ENCODE measurements at regions of chr7 and their contacts with region 1.

Region 1: DNA sequence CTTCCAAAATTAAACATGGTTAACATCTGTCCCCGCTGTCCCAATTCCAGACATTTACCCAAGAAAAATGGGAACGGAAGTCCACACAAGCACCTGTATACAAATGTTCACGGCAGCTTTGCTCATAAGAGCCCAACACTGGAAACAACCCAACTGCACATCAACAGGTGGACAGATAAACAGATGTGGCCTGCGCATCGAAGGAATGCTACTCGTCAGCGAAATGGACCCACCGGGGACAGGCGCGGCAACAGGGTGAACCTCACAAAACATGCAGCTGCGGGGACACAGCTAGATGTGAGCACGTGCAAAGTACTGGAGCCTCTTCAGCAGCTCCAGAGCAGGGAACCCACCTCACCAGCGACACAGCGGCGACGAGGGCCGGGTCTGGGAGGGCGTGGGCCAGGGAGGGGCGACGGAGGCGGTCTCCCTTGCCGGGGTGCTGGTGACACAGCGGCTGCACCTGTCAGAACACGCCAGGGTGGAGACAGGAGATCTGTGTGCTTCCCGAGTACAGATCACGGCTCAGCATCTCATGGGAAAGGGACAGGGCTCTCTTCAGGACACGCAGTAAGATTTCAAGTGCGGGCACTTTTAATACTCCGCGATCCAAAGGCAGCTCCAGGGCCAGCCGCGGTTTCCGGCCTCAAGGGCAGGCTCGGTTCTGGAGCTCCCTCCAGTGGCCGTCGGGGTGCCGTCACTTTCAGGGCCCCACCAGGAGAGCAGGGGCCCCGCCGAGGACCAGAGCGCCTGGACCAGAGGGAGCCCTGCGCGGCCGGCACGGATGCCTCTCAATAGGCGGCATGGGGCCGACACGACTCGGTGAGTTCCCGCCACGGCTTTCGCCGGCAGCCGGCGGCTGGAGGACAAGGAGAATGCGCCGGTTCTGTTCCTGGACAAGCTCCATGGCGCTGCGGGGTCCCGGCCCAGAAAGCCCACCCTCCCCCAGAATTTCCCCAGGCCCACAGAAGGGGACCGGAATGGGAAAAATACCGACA is 21.2 kb downstream of the GPR146 start:
- DNase-seq: peak; percentile 83
- ATAC-seq: peak; percentile 73
- H3K4me3 Mint-ChIP-seq: peak overlapping the region; percentile 73
- H3K27ac Mint-ChIP-seq: no peak overlapping the region
- H3K4me1 Mint-ChIP-seq: peaks cover 43% of the 10 kb centered on the region
- H3K27me3 Mint-ChIP-seq: peaks cover 5% of the 10 kb centered on the region
- CTCF ChIP-seq: peak; percentile 67

Region 2: GRCh38 chr7:691368-692040 is 374.1 kb before region 1 on chr7:
- CTCF ChIA-PET with region 1: no interaction called
- POLR2A ChIA-PET with region 1: no interaction called
- intact Hi-C with region 1: no loop called
- DNase-seq: no peak
- ATAC-seq: no peak
- H3K4me3 Mint-ChIP-seq: no peak overlapping the region
- H3K27ac Mint-ChIP-seq: no peak overlapping the region
- H3K4me1 Mint-ChIP-seq: no peaks in the 10 kb centered on the region
- H3K27me3 Mint-ChIP-seq: no peaks in the 10 kb centered on the region
- CTCF ChIP-seq: no peak

Region 3: DNA sequence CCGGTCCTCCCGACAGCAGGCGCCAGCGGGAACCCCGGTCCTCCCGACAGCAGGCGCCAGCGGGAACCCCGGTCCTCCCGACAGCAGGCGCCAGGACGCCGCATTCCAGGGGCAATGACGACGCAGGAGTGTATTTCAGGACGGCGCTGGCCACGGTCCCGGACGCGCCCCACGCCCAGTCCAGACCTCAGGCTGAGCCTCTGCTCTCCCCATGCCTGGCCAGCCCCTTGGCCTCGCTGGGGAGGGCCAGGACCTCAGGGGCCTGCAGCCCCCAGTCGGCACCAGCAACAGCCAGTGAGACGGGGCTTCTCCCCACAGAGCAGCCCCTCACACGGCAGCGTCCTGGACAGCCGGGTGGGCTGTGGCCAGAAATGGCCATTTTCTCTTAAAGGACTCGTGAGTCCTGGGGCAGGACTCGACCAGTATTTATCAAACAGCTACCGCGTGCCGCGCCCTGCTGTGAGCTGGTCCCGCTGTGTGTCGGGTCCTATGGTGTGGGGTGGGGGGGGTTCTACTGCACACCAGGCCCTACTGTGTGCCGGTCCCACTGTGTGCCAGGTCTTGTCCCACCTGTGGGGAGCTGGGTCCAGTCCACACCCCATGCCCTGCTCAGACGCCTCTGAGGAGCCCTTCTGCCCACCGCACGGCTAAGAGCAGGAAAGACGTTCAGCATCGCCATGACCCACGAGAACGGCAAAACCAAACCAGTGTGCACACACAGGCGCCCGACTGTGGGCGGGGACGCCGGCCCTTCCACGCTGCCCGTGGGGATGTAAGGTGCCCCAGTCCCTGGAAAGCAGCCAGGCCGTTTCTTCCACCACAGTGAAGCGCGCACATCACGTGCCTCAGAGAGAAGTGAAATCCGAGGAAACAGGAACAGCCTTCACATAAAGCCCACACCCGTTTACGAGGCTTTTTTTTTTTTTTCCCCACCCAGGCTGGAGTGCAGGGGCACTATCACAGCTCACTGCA is 155.9 kb before region 1 on chr7:
- CTCF ChIA-PET with region 1: interaction called, 5 read pairs
- POLR2A ChIA-PET with region 1: interaction called, 3 read pairs
- intact Hi-C with region 1: loop called (anchors 1 kb)
- DNase-seq: peak; percentile 59
- ATAC-seq: peak; percentile 51
- H3K4me3 Mint-ChIP-seq: peak overlapping the region; percentile 74
- H3K27ac Mint-ChIP-seq: no peak overlapping the region
- H3K4me1 Mint-ChIP-seq: peaks cover 15% of the 10 kb centered on the region
- H3K27me3 Mint-ChIP-seq: peaks cover 2% of the 10 kb centered on the region
- CTCF ChIP-seq: no peak

Region 4: DNA sequence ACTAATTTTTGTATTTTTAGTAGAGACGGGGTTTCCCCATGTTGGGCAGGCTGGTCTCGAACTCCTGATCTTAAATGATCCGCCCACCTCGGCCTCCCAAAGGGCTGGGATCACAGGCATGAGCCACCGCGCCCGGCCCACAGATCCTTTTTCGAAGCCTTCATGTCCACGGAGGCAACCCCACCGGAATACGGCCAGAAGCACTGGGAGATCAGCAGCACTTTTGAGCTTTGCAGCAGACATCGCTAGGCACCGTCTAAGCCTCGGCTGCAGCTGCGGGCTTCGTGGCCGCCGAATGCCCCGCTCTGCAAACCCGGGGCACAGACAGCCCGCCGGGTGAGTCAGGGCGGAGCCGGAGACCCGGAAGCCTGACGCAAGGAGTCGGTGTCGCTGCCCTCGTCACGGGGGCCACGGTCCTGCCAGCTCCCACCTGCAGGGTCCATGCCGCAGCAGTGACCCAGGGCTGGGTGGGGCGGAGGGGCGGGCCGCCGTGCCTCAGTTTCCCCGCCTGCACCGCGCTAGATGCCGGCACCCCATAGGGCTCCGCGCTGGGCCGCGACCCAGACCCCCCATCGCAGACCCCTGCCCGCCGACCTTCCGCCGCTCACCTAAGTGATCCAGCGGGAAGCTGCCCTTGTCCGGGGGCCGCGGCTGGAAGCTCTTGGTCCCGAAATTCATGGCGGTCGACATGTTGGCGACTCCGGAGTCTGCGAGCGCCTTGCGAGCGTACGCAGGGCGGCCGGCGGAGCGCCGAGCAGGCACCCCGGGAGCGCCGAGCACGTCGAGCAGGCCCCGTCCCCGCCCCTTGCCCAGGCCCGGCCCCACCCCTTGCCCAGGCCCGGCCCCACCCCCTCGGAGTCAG is 90.5 kb before region 1 on chr7 and contains the start of gene COX19:
- CTCF ChIA-PET with region 1: interaction called, 10 read pairs
- POLR2A ChIA-PET with region 1: interaction called, 9 read pairs
- intact Hi-C with region 1: no loop called
- DNase-seq: peak; percentile 92
- ATAC-seq: peak; percentile 84
- H3K4me3 Mint-ChIP-seq: peak within 1 kb of the TSS; percentile 91
- H3K27ac Mint-ChIP-seq: peak within 1 kb of the TSS; percentile 86
- H3K4me1 Mint-ChIP-seq: peaks cover 33% of the 10 kb centered on the region
- H3K27me3 Mint-ChIP-seq: no peaks in the 10 kb centered on the region
- CTCF ChIP-seq: no peak
- total RNA-seq, gene COX19: 21.2 and 24.5 TPM in 2 replicates

Region 5: DNA sequence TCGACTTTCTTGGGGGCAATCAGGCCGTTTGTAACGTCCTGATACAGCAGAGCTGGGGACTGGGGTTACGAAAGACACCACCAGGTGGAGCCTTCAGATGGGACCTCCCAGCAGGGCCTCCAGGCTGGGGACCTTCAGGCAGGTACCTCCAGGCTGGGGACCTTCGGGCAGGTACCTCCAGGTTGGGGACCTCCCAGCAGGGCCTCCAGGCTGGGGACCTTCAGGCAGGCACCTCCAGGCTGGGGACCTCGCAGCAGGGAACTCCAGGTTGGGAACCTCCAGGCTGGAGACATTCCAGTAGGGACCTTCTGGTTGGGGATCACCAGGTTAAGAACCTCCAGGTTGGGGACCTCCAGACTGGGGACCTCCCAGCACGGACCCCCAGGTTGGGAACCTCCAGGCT is 44.7 kb before region 1 on chr7:
- CTCF ChIA-PET with region 1: interaction called, 55 read pairs
- POLR2A ChIA-PET with region 1: interaction called, 148 read pairs
- intact Hi-C with region 1: loop called (anchors 1 kb)
- DNase-seq: no peak
- ATAC-seq: no peak
- H3K4me3 Mint-ChIP-seq: no peak overlapping the region
- H3K27ac Mint-ChIP-seq: no peak overlapping the region
- H3K4me1 Mint-ChIP-seq: peaks cover 56% of the 10 kb centered on the region
- H3K27me3 Mint-ChIP-seq: no peaks in the 10 kb centered on the region
- CTCF ChIP-seq: no peak

Region 6: GRCh38 chr7:1044191-1045068 is 21.1 kb before region 1 on chr7 and contains the start of gene GPR146:
- CTCF ChIA-PET with region 1: interaction called, 12 read pairs
- POLR2A ChIA-PET with region 1: interaction called, 18 read pairs
- intact Hi-C with region 1: loop called (anchors 2 kb)
- DNase-seq: peak; percentile 96
- ATAC-seq: peak; percentile 97
- H3K4me3 Mint-ChIP-seq: peak within 1 kb of the TSS; percentile 85
- H3K27ac Mint-ChIP-seq: peak within 1 kb of the TSS; percentile 50
- H3K4me1 Mint-ChIP-seq: peaks cover 24% of the 10 kb centered on the region
- H3K27me3 Mint-ChIP-seq: peaks cover 4% of the 10 kb centered on the region
- CTCF ChIP-seq: no peak
- total RNA-seq, gene GPR146: 6.2 and 6.9 TPM in 2 replicates

Region 7: DNA sequence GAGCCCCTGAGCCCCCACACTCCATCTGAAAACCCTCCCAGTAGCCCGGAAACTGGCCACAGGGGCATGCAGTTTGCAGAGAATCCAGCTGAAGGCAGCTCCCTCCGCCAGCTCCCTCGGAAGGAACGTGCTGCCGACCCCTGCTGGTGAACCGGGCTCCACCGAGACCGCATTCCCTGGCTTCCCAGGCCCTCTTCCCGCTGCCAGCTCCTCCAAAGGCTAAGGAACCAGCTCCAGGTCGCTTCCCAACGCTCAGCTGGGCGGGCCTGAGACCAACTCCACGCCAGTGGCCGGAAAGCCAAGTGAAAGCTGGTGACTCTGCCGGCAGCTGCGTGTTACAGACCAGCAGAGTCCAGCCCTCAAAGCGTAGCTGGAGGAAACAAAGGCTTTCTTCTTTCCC is 58.2 kb after region 1 on chr7:
- CTCF ChIA-PET with region 1: no interaction called
- POLR2A ChIA-PET with region 1: no interaction called
- intact Hi-C with region 1: no loop called
- DNase-seq: no peak
- ATAC-seq: no peak
- H3K4me3 Mint-ChIP-seq: no peak overlapping the region
- H3K27ac Mint-ChIP-seq: no peak overlapping the region
- H3K4me1 Mint-ChIP-seq: peaks cover 7% of the 10 kb centered on the region
- H3K27me3 Mint-ChIP-seq: no peaks in the 10 kb centered on the region
- CTCF ChIP-seq: no peak

Region 8: GRCh38 chr7:1137510-1138167 is 72.1 kb after region 1 on chr7:
- CTCF ChIA-PET with region 1: interaction called, 5 read pairs
- POLR2A ChIA-PET with region 1: interaction called, 8 read pairs
- intact Hi-C with region 1: loop called (anchors 1 kb)
- DNase-seq: no peak
- ATAC-seq: peak; percentile 62
- H3K4me3 Mint-ChIP-seq: peak overlapping the region; percentile 86
- H3K27ac Mint-ChIP-seq: peak overlapping the region; percentile 70
- H3K4me1 Mint-ChIP-seq: peaks cover 52% of the 10 kb centered on the region
- H3K27me3 Mint-ChIP-seq: no peaks in the 10 kb centered on the region
- CTCF ChIP-seq: no peak

Region 9: DNA sequence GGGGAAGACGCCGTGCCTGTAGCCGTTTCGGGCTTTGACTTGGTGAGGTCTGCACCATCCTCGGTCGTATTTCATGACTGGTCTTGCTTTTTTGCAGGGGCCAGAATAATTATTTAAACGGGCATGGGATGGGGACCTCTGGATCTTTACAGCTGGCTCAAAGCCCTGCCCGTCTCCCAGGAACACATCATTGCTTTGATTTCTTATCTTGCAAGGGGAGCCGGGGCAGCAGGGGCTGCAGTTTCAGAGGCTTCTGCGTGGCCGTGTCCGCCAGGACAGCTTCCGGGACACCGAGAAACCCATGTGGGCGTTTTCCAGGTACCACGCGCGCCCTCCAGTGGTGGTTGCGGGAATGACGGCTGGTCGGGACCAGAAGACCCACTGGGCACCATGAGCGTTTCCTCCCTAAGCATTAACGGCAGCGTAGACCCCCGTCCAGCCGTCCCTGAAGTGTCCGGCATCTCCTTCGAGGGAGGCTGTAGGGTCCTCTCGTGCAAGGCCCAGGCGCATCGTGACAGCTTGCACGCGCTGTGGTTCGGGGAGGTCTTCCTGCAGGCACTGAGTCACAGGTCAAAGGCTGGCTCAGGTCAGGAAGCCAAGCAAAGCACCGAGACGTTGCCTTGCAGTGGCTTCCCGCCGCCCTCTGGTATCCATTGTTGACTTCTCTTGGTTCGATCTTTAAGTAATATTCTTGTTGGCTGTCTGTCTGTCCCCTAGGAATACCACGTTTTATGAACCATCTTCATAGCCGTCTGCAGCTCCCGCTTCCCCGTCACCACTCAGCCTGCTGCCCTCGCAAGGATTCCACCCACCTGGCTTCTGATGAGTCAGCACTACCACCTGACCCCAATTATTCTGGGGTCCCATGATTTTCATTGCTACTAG is 110.6 kb after region 1 on chr7:
- CTCF ChIA-PET with region 1: interaction called, 14 read pairs
- POLR2A ChIA-PET with region 1: interaction called, 3 read pairs
- intact Hi-C with region 1: loop called (anchors 5 kb)
- DNase-seq: peak; percentile 85
- ATAC-seq: peak; percentile 80
- H3K4me3 Mint-ChIP-seq: peak overlapping the region; percentile 11
- H3K27ac Mint-ChIP-seq: no peak overlapping the region
- H3K4me1 Mint-ChIP-seq: peaks cover 11% of the 10 kb centered on the region
- H3K27me3 Mint-ChIP-seq: peaks cover 15% of the 10 kb centered on the region
- CTCF ChIP-seq: peak; percentile 78

Region 10: DNA sequence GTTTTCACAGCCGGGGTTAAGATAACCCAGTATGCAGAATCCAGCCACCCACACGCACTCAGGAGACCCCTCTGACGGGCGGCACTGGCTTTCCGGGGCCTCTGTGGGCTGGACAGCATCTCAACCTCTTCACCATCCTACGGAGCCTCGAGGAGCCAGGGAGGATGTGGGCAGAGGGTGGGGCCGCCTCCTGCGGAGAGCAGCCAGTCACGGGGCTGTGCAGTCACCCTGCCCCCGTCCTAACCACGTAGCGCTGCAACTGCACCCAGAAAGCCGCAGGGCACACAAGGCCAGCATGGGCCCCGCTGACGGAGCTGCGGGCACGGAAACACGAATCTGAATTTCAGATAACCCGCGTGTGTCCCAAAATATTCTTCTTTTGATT is 874.8 kb after region 1 on chr7:
- CTCF ChIA-PET with region 1: no interaction called
- POLR2A ChIA-PET with region 1: no interaction called
- intact Hi-C with region 1: no loop called
- DNase-seq: peak; percentile 70
- ATAC-seq: peak; percentile 97
- H3K4me3 Mint-ChIP-seq: peak overlapping the region; percentile 84
- H3K27ac Mint-ChIP-seq: peak overlapping the region; percentile 91
- H3K4me1 Mint-ChIP-seq: peaks cover 41% of the 10 kb centered on the region
- H3K27me3 Mint-ChIP-seq: no peaks in the 10 kb centered on the region
- CTCF ChIP-seq: no peak